ENCODE measurements at regions of chr13 and their contacts with region 1.

Region 1: GRCh38 chr13:35720690-35721554 is 244.4 kb upstream of the MAB21L1 start:
- DNase-seq: no peak
- H3K4me3 ChIP-seq: peak overlapping the region; percentile 35
- CTCF ChIP-seq: peak; percentile 98

Region 2: DNA sequence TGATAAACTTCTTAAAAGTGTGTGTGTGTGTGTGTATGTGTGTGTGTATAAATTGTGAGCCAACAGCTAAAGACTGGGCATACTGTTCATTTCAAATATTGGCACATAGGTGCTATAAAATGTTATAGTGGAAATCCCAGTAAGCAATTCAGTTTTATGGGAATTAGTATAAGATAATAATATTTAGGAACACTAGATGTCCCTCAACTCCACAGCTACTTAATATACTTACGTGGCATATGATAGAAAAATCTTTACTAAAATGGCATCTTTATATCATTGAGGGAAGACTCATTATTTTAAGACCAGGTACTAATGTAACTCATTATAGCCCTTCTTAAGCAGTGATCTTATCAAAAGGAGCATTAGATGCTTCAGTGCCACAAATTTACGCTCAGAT is 510.7 kb before region 1 on chr13:
- CTCF ChIA-PET with region 1: interaction called, 21 read pairs
- POLR2A ChIA-PET with region 1: no interaction called
- DNase-seq: no peak
- H3K4me3 ChIP-seq: no peak overlapping the region
- CTCF ChIP-seq: no peak

Region 3: GRCh38 chr13:35771898-35772297 is 51.0 kb after region 1 on chr13:
- CTCF ChIA-PET with region 1: interaction called, 11 read pairs
- POLR2A ChIA-PET with region 1: no interaction called
- DNase-seq: peak; percentile 98
- H3K4me3 ChIP-seq: no peak overlapping the region
- CTCF ChIP-seq: peak; percentile 17

Region 4: DNA sequence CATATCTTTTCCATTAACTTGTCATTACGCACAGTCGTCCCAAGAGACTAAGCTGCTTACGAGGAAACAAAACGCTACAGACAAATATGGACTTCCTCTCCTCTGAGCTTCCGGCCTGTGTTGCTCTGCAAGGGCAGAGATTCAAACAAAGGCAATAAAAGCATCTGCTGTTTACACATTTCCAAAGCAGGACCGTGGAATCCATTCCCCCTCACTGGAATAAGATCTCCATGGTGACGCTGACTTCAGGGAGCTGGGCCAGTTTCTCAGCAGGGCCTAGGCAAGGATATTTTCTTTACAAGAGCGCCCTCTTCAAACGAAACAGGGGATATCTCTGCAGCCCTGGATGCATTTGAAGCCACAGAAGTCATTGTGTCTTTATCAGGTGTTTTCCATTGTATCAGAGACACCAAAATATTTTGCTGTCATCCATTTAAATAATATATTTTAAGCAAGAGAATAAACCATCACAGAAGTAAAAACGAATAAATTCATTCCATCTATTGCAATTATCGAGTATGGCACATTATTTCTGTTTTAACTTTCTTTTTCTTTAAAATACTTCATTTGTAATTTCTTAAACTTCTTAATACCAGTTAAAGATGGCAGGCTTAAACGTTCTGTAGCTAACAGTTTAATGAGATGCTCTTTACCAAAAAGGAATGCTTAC is 232.8 kb after region 1 on chr13:
- CTCF ChIA-PET with region 1: interaction called, 16 read pairs
- POLR2A ChIA-PET with region 1: no interaction called
- DNase-seq: peak; percentile 64
- H3K4me3 ChIP-seq: peak overlapping the region; percentile 36
- CTCF ChIP-seq: peak; percentile 69